ENCODE measurements at regions of chr16 and their contacts with region 1.

Region 1: GRCh38 chr16:55842369-55843104 is 9.6 kb upstream of the CES1 start:
- DNase-seq: peak; percentile 55
- H3K4me3 ChIP-seq: no peak overlapping the region
- H3K27ac ChIP-seq: no peak overlapping the region
- H3K4me1 ChIP-seq: no peaks in the 10 kb centered on the region
- CTCF ChIP-seq: peak; percentile 89

Region 2: DNA sequence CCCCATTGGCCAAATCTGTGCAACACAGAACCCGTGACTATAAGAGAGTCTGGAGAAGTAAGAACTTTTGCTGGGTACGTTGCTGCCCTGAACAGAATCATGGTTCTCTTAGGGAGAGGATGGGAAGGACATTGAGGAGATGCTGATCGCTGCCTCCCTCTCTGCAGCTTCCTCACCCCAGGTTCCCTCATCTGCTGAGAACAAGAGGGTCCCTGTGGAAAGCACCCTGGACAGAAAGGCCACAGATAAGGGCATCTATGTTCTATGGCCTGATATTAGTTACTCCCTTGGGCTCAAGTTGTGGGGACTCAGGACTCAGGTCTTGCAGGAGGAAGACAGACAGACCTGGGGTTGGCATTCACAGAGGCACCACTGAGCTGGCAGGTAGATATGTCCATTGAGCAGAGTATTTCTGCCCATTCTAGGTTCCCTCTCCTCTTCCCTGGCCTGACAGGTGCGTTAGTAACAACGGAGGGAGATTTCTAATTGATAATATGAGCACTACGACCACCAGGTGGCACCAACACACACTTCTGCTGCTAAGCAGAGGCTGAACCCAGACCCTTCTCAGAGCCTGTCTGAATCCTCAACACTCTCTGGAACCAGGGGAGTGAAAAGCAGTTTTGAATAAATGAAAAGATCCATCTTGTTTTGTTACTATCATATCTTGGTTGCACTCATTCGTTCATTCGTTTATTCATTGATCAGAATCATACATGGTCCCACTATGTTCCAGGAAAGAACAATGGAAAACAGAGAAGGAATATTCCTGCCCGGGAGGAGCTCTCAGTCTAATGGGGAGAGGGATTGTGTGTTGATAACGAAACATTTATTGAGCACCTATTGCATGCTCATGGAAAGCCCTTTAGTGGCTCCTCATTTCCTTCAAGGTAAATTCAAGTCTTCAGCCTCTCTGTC is 130.3 kb before region 1 on chr16:
- CTCF ChIA-PET with region 1: no interaction called
- POLR2A ChIA-PET with region 1: no interaction called
- intact Hi-C with region 1: loop called (anchors 1 kb)
- DNase-seq: peak; percentile 63
- H3K4me3 ChIP-seq: no peak overlapping the region
- H3K27ac ChIP-seq: no peak overlapping the region
- H3K4me1 ChIP-seq: no peaks in the 10 kb centered on the region
- CTCF ChIP-seq: peak; percentile 85

Measured in OCI-LY7 (cell line).